Activated T-helper 1 cell treated with anti-CD3 and anti-CD28 coated beads, Interleukin-12 subunit alpha, Interleukin-12 subunit beta, Interleukin-2, Interleukin-4 antibody, amounts not matched to agents 30 ng/mL and 10 ng/mL and 1 ng/mL, durations not matched to agents 14 hours and 24 hours and 36 hours (primary cell): ENCODE measurements at regions of chr12 and their contacts with region 1.

Region 1: DNA sequence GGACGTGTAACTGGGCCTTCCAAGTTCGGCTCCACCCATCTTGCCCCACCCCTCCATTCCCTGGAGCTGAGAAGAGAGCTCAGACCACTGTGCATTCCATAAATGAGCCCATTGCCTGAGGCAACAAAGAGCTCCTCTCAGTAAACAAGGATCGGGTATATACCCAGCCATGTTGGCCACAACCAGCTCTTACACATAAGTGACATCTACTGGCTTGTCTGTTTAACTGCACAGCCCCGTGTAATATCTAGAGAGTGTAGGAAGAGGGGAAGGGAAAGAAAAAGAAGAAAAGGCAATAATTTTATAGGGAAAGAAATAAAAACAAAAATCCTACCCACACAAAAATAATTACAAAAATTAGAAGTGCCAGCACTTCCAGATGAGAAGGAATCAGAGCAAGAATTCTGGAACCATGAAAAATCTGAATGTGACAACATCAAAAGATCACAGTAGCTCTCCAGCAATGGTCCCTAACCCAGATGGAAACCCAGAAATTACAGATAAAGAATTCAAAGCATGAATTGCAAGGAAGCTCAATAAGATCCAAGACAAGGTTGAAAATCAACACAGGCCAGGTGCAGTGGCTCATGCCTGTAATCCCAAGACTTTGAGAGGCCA is 308.1 kb downstream of the RPAP3 start:
- DNase-seq: peak; percentile 41
- H3K4me3 Mint-ChIP-seq: no peak overlapping the region
- H3K27ac Mint-ChIP-seq: peak overlapping the region; percentile 89
- H3K4me1 Mint-ChIP-seq: peaks cover 90% of the 10 kb centered on the region
- H3K27me3 Mint-ChIP-seq: no peaks in the 10 kb centered on the region

Region 2: DNA sequence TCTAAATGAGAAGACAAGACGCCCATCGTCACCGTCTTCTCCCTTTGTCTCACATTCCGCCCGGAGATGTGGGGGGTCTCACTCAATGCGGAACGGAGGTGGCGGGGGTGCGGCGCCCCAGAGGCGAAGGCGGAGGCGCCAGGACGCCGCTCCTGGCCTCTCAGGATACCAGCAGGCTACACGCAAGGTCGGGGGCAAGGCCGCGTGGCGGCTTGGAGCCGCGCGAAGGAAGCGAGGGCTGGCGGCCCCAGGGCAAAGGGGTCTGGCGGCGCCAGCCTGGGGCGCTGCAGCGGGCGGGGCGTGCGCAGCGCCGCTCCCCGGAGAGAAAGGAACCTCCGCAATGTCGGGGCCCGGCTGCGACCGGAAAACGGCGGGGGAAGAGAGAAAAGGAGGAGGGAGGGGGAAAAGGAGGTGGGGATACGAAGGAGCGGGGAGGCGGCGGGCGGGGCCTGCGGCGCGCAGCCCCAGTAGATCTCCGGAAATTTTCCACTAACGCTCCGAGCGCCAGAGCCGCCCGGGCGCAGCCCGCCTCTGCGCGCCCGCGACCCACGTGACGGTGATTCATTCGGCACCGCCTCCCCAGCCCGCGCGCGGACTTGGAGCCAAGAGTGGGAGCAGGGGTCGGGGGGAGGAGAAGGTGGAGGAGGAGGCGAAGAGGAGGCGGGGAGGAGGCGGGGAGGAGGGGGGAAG is 1014.7 kb before region 1 on chr12:
- intact Hi-C with region 1: loop called (anchors 10 kb)
- DNase-seq: peak; percentile 95
- H3K4me3 Mint-ChIP-seq: peak overlapping the region; percentile 84
- H3K27ac Mint-ChIP-seq: peak overlapping the region; percentile 92
- H3K4me1 Mint-ChIP-seq: peaks cover 54% of the 10 kb centered on the region
- H3K27me3 Mint-ChIP-seq: no peaks in the 10 kb centered on the region

Region 3: DNA sequence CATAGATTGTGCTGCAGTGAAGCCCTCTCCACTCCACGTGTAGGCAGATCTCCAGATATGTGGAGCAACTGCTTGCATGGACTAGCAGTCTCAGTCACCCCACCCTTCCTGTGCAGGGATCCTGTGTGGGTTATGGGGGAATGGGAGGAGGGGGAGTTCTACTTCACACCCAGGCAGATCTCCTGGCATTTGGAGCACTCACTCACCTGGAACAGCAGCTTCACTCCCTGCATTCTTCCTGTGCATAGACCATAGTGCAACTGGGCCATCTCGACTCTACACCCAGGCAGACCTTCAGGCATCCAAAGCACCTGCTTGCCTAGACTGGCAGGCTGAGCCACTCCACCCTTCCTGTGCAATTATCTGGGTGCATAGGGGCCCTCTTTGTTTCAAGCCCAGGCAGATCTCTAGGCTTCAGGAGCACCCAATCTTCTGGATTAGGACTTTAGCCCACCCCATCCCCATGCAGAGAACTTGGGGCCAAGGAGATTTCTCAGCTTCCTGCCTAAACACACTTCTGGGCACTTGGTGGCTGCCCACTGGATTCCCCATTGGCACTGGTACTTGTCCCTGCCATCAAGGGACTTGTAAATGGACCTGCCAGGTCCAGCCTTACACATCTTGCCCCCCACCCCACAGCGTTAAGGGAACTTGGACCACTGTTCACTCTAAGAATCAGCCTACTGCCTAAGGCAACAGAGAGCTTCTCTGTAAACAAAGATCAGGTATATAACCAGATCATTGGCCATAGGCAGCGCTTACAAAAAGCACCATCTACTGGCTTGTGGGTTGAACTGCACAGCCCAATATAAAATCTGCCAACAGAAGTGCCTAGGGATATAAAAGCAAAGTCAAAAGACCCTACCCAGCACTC is 414.1 kb before region 1 on chr12:
- intact Hi-C with region 1: no loop called
- DNase-seq: peak; percentile 3
- H3K4me3 Mint-ChIP-seq: no peak overlapping the region
- H3K27ac Mint-ChIP-seq: no peak overlapping the region
- H3K4me1 Mint-ChIP-seq: no peaks in the 10 kb centered on the region
- H3K27me3 Mint-ChIP-seq: peaks cover 8% of the 10 kb centered on the region

Region 4: GRCh38 chr12:47079468-47079980 is 318.2 kb before region 1 on chr12 and contains the starts of genes AMIGO2 and PCED1B:
- intact Hi-C with region 1: loop called (anchors 1 kb)
- DNase-seq: peak; percentile 63
- H3K4me3 Mint-ChIP-seq: peak within 1 kb of the TSS; percentile 97
- H3K27ac Mint-ChIP-seq: peak within 1 kb of the TSS; percentile 97
- H3K4me1 Mint-ChIP-seq: peaks cover 81% of the 10 kb centered on the region
- H3K27me3 Mint-ChIP-seq: no peaks in the 10 kb centered on the region
- total RNA-seq, gene AMIGO2: 11.6 and 12.5 TPM in 2 replicates
- total RNA-seq, gene PCED1B: 50.8 and 55.5 TPM in 2 replicates

Region 5: GRCh38 chr12:47276621-47277309 is 121.0 kb before region 1 on chr12:
- intact Hi-C with region 1: loop called (anchors 2 kb)
- DNase-seq: peak; percentile 63
- H3K4me3 Mint-ChIP-seq: peak overlapping the region; percentile 46
- H3K27ac Mint-ChIP-seq: peak overlapping the region; percentile 88
- H3K4me1 Mint-ChIP-seq: peaks cover 66% of the 10 kb centered on the region
- H3K27me3 Mint-ChIP-seq: no peaks in the 10 kb centered on the region

Region 6: DNA sequence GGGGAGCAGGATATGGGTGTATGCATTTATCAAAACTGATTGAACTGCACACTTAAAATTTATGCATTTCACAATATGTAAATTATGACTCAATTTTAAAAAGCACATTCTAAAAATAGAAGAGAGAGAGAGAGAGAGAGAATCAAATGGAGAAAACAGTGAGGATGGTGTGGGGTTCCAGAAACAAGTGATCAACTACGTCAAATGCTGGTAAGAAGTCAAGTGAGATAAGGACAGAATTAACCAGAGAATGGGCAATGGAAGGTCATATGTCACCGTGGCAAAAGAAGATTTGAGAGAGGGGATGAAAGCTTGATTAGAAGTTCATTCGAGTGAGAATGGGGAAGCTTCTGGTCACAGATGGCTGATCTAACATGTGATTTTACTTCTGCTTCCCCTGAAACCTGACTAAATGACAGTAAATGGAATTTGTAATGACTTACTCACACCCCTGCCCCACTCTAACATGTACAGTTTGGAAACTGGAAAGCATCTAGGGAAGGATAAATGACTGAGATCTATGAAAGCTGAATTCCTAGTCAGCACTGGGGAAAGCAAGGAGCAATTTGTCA is 41.6 kb before region 1 on chr12:
- intact Hi-C with region 1: loop called (anchors 1 kb)
- DNase-seq: no peak
- H3K4me3 Mint-ChIP-seq: peak overlapping the region; percentile 60
- H3K27ac Mint-ChIP-seq: peak overlapping the region; percentile 97
- H3K4me1 Mint-ChIP-seq: peaks cover 73% of the 10 kb centered on the region
- H3K27me3 Mint-ChIP-seq: no peaks in the 10 kb centered on the region

Region 7: DNA sequence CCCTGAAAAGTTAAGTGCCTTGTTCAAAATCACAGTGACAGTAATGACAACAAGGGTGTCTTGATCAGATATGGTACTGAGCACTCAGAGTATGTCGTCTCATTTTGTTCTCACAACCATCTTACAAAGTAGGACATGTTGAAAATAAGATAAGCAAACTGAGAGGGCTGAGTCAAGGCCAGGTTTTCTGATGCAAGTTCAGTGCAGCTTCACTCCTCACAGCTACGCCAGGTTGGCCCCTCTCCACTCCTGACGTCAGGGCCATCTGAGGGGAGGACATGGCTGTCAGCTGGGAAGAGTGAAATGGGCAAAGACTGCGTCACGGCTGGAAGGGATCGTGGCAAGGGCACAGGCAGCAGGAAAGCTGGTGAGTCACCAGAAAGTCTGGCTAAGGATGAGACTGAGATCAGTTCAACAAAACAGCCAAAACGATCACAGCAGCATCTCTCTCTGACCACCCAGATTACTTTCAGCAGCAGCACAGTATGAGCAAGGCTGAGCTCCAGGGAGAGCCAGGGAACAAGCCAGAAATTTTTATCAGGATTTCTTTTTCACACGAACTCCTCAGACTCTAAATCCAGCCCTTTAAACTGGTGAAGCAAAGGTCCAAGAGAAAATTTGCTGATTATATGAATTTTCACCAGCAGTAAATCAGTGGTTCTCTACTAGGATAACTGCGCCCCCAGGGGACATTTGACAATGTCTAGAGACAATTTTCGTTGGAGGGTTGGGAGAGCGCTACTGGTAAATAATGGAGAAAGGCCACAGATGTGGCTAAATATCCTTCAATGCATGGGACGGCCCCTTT is 20.2 kb before region 1 on chr12:
- intact Hi-C with region 1: loop called (anchors 2 kb)
- DNase-seq: no peak
- H3K4me3 Mint-ChIP-seq: no peak overlapping the region
- H3K27ac Mint-ChIP-seq: peak overlapping the region; percentile 4
- H3K4me1 Mint-ChIP-seq: peaks cover 60% of the 10 kb centered on the region
- H3K27me3 Mint-ChIP-seq: no peaks in the 10 kb centered on the region

Region 8: DNA sequence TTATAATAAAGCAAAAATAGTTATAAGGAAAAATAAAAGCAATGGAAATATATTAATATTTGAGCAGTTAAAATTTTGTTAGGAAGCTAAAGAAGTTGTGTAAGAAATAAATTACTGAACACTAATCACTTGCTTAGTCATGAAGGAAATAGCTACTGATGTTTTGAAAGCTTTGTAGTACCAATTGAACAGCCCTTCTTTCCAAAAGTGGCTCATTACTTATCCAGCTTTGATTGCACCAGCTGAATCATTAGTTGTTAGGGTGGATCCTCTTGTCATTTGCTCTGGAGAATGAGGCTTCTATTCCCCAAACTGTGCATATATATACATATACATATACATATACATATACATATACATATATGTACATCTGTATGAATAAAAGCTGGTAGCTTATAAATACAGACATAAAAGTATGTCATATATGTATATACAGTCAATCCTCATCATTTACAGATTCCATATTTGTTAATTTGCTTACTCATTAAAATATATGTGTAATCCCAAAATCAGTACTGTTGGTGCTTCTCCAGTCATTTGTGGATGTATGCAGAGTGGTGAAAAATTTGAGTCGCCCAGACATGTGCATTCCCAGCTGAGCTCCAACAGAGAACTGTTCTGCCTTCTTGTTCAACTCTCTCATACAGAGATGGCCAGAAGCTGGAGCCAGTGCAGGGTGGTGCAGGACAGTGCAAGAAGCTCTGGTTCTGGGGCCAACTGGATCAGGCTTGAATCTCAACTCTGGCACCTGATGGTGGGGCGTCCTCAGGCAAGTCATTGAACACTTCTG is 93.9 kb after region 1 on chr12:
- intact Hi-C with region 1: no loop called
- DNase-seq: no peak
- H3K4me3 Mint-ChIP-seq: no peak overlapping the region
- H3K27ac Mint-ChIP-seq: no peak overlapping the region
- H3K4me1 Mint-ChIP-seq: peaks cover 11% of the 10 kb centered on the region
- H3K27me3 Mint-ChIP-seq: no peaks in the 10 kb centered on the region

Region 9: GRCh38 chr12:47812797-47813510 is 415.2 kb after region 1 on chr12:
- intact Hi-C with region 1: loop called (anchors 10 kb)
- DNase-seq: peak; percentile 92
- H3K4me3 Mint-ChIP-seq: peak overlapping the region; percentile 96
- H3K27ac Mint-ChIP-seq: peak overlapping the region; percentile 98
- H3K4me1 Mint-ChIP-seq: peaks cover 92% of the 10 kb centered on the region
- H3K27me3 Mint-ChIP-seq: no peaks in the 10 kb centered on the region